ENCODE measurements at regions of chr17 and their contacts with region 1.

Region 1: GRCh38 chr17:7045909-7046724 is 2.2 kb upstream of the SLC16A11 start:
- DNase-seq: peak in 8 of 9 donors; percentile 48 to 79 (median 69)
- ATAC-seq: peak; percentile 58
- H3K4me3 ChIP-seq: peak overlapping the region; percentile 66
- H3K4me3 Mint-ChIP-seq: peak overlapping the region; percentile 78 to 91 (median 86)
- H3K27ac ChIP-seq: peak overlapping the region; percentile 74
- H3K27ac Mint-ChIP-seq: peak overlapping the region; percentile 69 to 96 (median 92)
- H3K4me1 ChIP-seq: peaks cover 27 to 30% of the 10 kb centered on the region in 2 donors
- H3K4me1 Mint-ChIP-seq: peaks cover 0 to 53% (median 36%) of the 10 kb centered on the region in 7 donors
- H3K27me3 ChIP-seq: no peaks in the 10 kb centered on the region
- H3K27me3 Mint-ChIP-seq: peaks cover 0 to 36% (median 0%) of the 10 kb centered on the region in 5 donors

Region 2: GRCh38 chr17:6636616-6637457 is 409.3 kb before region 1 on chr17:
- CTCF ChIA-PET with region 1: no interaction called
- POLR2A ChIA-PET with region 1: no interaction called
- intact Hi-C with region 1: no loop called
- DNase-seq: no peak
- ATAC-seq: no peak
- H3K4me3 ChIP-seq: no peak overlapping the region
- H3K4me3 Mint-ChIP-seq: peak overlapping the region in 2 of 10 donors; percentile 37 to 73
- H3K27ac ChIP-seq: no peak overlapping the region
- H3K27ac Mint-ChIP-seq: peak overlapping the region in 2 of 9 donors; percentile 50 to 65
- H3K4me1 ChIP-seq: peaks cover 13 to 18% of the 10 kb centered on the region in 2 donors
- H3K4me1 Mint-ChIP-seq: peaks cover 21 to 42% (median 28%) of the 10 kb centered on the region in 7 donors
- H3K27me3 ChIP-seq: no peaks in the 10 kb centered on the region
- H3K27me3 Mint-ChIP-seq: no peaks in the 10 kb centered on the region

Region 3: GRCh38 chr17:6823011-6823442 is 223.1 kb before region 1 on chr17:
- CTCF ChIA-PET with region 1: no interaction called
- POLR2A ChIA-PET with region 1: no interaction called
- intact Hi-C with region 1: no loop called
- DNase-seq: no peak
- ATAC-seq: no peak
- H3K4me3 ChIP-seq: no peak overlapping the region
- H3K4me3 Mint-ChIP-seq: no peak overlapping the region
- H3K27ac ChIP-seq: no peak overlapping the region
- H3K27ac Mint-ChIP-seq: no peak overlapping the region
- H3K4me1 ChIP-seq: no peaks in the 10 kb centered on the region
- H3K4me1 Mint-ChIP-seq: no peaks in the 10 kb centered on the region
- H3K27me3 ChIP-seq: no peaks in the 10 kb centered on the region
- H3K27me3 Mint-ChIP-seq: peaks cover 11 to 45% (median 35%) of the 10 kb centered on the region in 5 donors

Region 4: GRCh38 chr17:6913608-6914443 is 132.3 kb before region 1 on chr17:
- CTCF ChIA-PET with region 1: interaction called, 11 read pairs
- POLR2A ChIA-PET with region 1: no interaction called
- intact Hi-C with region 1: no loop called
- DNase-seq: peak; percentile 48 to 76 (median 70)
- ATAC-seq: peak; percentile 90
- H3K4me3 ChIP-seq: peak overlapping the region; percentile 45
- H3K4me3 Mint-ChIP-seq: peak overlapping the region; percentile 81 to 93 (median 88)
- H3K27ac ChIP-seq: no peak overlapping the region
- H3K27ac Mint-ChIP-seq: peak overlapping the region in 5 of 9 donors; percentile 12 to 88 (median 38)
- H3K4me1 ChIP-seq: peaks cover 0 to 6% of the 10 kb centered on the region in 2 donors
- H3K4me1 Mint-ChIP-seq: peaks cover 9 to 24% (median 19%) of the 10 kb centered on the region in 7 donors
- H3K27me3 ChIP-seq: no peaks in the 10 kb centered on the region
- H3K27me3 Mint-ChIP-seq: peaks cover 0 to 43% (median 0%) of the 10 kb centered on the region in 5 donors

Region 5: DNA sequence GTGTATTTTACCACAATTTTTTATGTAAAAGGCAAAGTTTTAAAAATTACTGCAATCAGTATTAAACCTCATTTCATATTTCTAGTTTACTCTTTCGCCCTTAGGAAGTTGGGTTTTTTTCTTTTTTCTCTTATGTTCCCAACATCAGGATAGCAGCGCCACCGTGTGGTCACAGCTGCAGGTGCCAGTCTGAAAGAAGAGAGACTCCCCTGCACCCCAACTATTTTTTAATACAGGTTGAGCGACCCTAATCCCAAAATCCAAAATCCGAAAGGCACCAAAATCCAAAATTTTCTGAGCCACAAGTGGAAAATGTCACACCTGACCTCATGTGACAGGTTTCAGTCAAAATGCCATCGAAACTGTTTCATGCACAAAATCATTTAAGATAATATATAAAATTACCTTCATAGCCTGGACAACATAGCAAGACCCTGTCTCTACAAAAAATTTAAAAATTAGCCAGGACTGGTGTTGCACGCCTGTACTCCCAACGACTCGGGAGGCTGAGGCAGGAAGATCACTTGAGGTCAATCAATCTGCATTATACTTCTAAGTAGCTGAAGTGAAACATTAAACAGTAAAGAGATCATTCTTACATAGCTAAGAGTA is 90.3 kb after region 1 on chr17:
- CTCF ChIA-PET with region 1: interaction called, 145 read pairs
- POLR2A ChIA-PET with region 1: interaction called, 20 read pairs
- intact Hi-C with region 1: loop called (anchors 1 kb)
- DNase-seq: peak; percentile 53 to 74 (median 71)
- ATAC-seq: peak; percentile 24
- H3K4me3 ChIP-seq: no peak overlapping the region
- H3K4me3 Mint-ChIP-seq: peak overlapping the region in 4 of 10 donors; percentile 32 to 53 (median 44)
- H3K27ac ChIP-seq: no peak overlapping the region
- H3K27ac Mint-ChIP-seq: peak overlapping the region in 4 of 9 donors; percentile 8 to 48 (median 28)
- H3K4me1 ChIP-seq: peaks cover 6 to 20% of the 10 kb centered on the region in 2 donors
- H3K4me1 Mint-ChIP-seq: peaks cover 13 to 34% (median 23%) of the 10 kb centered on the region in 7 donors
- H3K27me3 ChIP-seq: no peaks in the 10 kb centered on the region
- H3K27me3 Mint-ChIP-seq: peaks cover 0 to 24% (median 6%) of the 10 kb centered on the region in 5 donors

Region 6: GRCh38 chr17:7214300-7215135 is 168.4 kb after region 1 on chr17:
- CTCF ChIA-PET with region 1: no interaction called
- POLR2A ChIA-PET with region 1: interaction called, 5 read pairs
- intact Hi-C with region 1: loop called in 1 of 2 experiments (anchors 2 kb)
- DNase-seq: peak; percentile 96 to 99 (median 97)
- ATAC-seq: peak; percentile 90
- H3K4me3 ChIP-seq: peak overlapping the region; percentile 61
- H3K4me3 Mint-ChIP-seq: peak overlapping the region; percentile 76 to 97 (median 94)
- H3K27ac ChIP-seq: peak overlapping the region; percentile 97
- H3K27ac Mint-ChIP-seq: peak overlapping the region; percentile 90 to 100 (median 99)
- H3K4me1 ChIP-seq: peaks cover 25 to 49% of the 10 kb centered on the region in 2 donors
- H3K4me1 Mint-ChIP-seq: peaks cover 36 to 69% (median 65%) of the 10 kb centered on the region in 7 donors
- H3K27me3 ChIP-seq: no peaks in the 10 kb centered on the region
- H3K27me3 Mint-ChIP-seq: peaks cover 0 to 16% (median 0%) of the 10 kb centered on the region in 5 donors

Region 7: DNA sequence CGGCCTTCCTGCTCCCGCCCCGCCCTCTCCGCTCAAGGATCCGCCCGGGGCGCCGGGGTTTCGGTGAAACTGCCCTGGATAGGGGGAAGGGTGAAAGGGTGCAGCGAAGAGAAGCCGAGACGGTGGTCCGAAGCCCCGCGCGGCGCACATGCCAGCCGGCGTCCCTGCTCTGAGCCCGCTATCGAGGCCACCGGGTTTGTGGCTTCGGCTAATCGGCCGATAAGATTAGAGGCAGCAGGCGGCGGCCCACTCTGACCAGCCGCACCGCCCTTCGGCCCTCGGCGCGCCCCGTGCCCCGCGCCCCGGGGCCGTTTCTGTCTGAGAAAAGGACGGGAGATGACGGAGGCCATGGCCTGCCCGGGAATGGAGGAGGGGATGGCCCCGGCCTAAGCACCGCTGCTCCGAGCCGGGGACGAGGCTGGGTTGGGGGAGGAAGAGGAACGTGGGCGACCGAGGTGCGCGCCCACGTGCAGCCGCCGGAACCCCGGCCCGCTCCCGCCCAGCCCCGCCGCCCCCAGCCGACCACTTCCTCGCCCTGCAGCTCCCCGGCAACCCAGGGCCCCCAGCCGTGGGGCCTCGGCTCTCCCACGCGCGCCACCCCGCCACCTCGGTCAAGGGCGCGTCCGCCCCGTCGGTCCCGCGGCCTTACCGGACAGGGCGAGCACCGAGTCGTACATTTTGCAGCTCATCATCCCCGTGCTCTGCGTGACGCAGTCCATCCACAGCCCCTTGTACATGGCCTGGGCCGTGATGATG is 215.2 kb after region 1 on chr17:
- CTCF ChIA-PET with region 1: no interaction called
- POLR2A ChIA-PET with region 1: no interaction called
- intact Hi-C with region 1: no loop called
- DNase-seq: peak in 1 of 9 donors; percentile 34
- ATAC-seq: peak; percentile 63
- H3K4me3 ChIP-seq: peak overlapping the region; percentile 59
- H3K4me3 Mint-ChIP-seq: peak overlapping the region; percentile 65 to 87 (median 76)
- H3K27ac ChIP-seq: peak overlapping the region; percentile 68
- H3K27ac Mint-ChIP-seq: peak overlapping the region in 8 of 9 donors; percentile 29 to 68 (median 56)
- H3K4me1 ChIP-seq: peaks cover 13 to 19% of the 10 kb centered on the region in 2 donors
- H3K4me1 Mint-ChIP-seq: peaks cover 18 to 35% (median 28%) of the 10 kb centered on the region in 7 donors
- H3K27me3 ChIP-seq: no peaks in the 10 kb centered on the region
- H3K27me3 Mint-ChIP-seq: peaks cover 0 to 32% (median 14%) of the 10 kb centered on the region in 5 donors

Region 8: DNA sequence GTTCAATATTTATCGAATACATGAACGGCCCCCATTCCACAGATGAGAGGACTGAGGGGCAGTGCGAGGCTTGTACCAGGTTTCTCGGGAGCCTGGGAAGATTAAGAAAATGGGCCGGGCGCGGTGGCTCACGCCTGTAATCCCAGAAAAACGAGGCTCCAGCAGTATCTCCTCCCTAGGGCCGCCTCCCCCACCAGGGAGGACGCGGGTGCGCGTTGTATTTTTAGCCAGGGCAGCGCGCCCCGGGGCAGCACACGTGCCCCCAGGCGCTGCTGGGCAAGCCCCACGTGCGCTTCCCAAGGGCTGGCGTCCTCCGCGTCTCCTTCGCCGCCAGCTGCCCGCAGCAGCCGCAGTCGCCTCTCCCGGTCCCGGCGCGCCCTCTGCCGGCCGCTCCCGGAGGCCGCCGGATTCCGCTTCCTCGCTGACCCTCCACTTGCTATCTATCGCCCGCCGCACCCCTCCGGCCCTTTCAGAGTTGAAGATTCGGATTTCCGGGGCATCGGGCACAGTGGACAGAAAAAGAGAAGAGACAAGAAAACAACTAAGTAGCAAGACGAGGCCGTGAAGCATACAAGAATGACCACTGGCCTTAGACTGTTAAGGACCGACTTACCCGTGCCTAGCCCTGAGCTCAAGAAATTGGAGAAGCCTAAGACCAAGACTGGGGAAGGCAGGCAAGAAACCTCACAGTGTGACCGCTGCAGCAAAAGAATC is 250.2 kb after region 1 on chr17:
- CTCF ChIA-PET with region 1: interaction called, 24 read pairs
- POLR2A ChIA-PET with region 1: interaction called, 4 read pairs
- intact Hi-C with region 1: loop called (anchors 1 kb)
- DNase-seq: peak in 5 of 9 donors; percentile 41 to 86 (median 62)
- ATAC-seq: peak; percentile 63
- H3K4me3 ChIP-seq: no peak overlapping the region
- H3K4me3 Mint-ChIP-seq: peak overlapping the region; percentile 18 to 89 (median 52)
- H3K27ac ChIP-seq: no peak overlapping the region
- H3K27ac Mint-ChIP-seq: peak overlapping the region in 2 of 9 donors; percentile 51 to 66
- H3K4me1 ChIP-seq: peaks cover 12 to 26% of the 10 kb centered on the region in 2 donors
- H3K4me1 Mint-ChIP-seq: peaks cover 6 to 30% (median 25%) of the 10 kb centered on the region in 7 donors
- H3K27me3 ChIP-seq: no peaks in the 10 kb centered on the region
- H3K27me3 Mint-ChIP-seq: peaks cover 4 to 54% (median 18%) of the 10 kb centered on the region in 5 donors